Activated CD8-positive, alpha-beta T cell treated with anti-CD3 and anti-CD28 coated beads, Interleukin-2, amount 10 ng/mL, durations not matched to agents 7 days and 5 days (primary cell): ENCODE measurements at regions of chr12 and their contacts with region 1.

Region 1: GRCh38 chr12:57101844-57102695 is 9.1 kb downstream of the STAT6 start:
- DNase-seq: no peak
- ATAC-seq: peak; percentile 23
- H3K4me3 Mint-ChIP-seq: no peak overlapping the region
- H3K27ac Mint-ChIP-seq: peak overlapping the region; percentile 82
- H3K4me1 Mint-ChIP-seq: peaks cover 55% of the 10 kb centered on the region
- H3K27me3 Mint-ChIP-seq: no peaks in the 10 kb centered on the region

Region 2: DNA sequence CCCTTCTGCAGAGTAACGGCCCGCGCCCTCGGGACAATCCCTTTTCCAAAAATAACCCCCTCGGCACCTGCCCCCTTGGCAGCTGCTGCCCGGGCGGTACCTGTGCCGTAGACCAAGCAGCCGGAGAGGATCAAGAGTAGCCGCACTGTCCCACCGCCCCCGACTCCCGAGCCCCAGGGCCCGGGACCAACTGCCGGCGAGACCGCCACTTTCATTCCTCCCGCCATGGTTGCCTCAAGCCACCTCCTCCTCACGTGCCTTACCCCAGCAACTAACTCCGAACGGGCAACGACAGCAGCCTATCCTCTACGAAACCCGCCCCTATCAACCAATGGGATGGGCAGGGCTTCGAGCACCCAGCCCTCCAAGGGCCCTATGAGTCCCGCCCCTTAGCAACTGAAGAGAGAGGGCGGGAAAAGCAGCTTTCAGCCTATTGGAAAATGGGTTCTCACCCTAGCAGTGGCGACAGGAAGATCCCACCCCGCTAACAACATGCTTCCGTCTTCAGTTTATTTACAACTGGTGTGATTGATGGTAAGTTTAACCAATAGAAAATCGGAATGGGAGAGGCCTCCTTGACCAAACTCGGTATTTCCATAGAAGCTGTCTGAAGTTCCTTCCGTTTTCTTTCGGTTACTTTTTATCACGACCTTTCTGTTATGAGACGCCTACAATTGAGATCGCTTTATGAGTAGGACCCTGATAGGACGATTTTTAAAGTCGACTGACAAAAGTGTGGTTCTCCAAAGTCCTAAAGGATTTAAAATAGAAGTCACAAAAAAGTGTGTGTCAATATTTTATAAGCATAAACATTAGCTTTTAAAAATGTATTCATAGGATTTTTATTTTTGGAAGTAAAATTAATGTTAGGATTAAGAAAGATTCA is 23.3 kb before region 1 on chr12 and contains the start of gene NEMP1:
- CTCF ChIA-PET with region 1: interaction called, 190 read pairs
- POLR2A ChIA-PET with region 1: interaction called, 17 read pairs
- DNase-seq: peak; percentile 99
- ATAC-seq: peak; percentile 97
- H3K4me3 Mint-ChIP-seq: peak within 1 kb of the TSS; percentile 99
- H3K27ac Mint-ChIP-seq: peak within 1 kb of the TSS; percentile 98
- H3K4me1 Mint-ChIP-seq: peaks cover 29% of the 10 kb centered on the region
- H3K27me3 Mint-ChIP-seq: no peaks in the 10 kb centered on the region
- total RNA-seq, gene NEMP1: 56.4 to 56.9 TPM